Activated CD8-positive, alpha-beta T cell treated with anti-CD3 and anti-CD28 coated beads, Interleukin-2, amount 10 ng/mL, durations not matched to agents 7 days and 5 days (primary cell): ENCODE measurements at regions of chr1 and their contacts with region 1.

Region 1: GRCh38 chr1:32773018-32773763 is 44.0 kb downstream of the YARS1 start:
- DNase-seq: peak; percentile 80
- ATAC-seq: peak; percentile 80
- H3K4me3 Mint-ChIP-seq: no peak overlapping the region
- H3K27ac Mint-ChIP-seq: no peak overlapping the region
- H3K4me1 Mint-ChIP-seq: peaks cover 21% of the 10 kb centered on the region
- H3K27me3 Mint-ChIP-seq: no peaks in the 10 kb centered on the region

Region 2: GRCh38 chr1:32521165-32521564 is 252.0 kb before region 1 on chr1:
- CTCF ChIA-PET with region 1: interaction called, 19 read pairs
- POLR2A ChIA-PET with region 1: no interaction called
- DNase-seq: no peak
- ATAC-seq: no peak
- H3K4me3 Mint-ChIP-seq: peak overlapping the region; percentile 72
- H3K27ac Mint-ChIP-seq: no peak overlapping the region
- H3K4me1 Mint-ChIP-seq: peaks cover 3% of the 10 kb centered on the region
- H3K27me3 Mint-ChIP-seq: peaks cover 5% of the 10 kb centered on the region

Region 3: GRCh38 chr1:32702599-32703478 is 70.4 kb before region 1 on chr1 and contains the start of gene SYNC:
- CTCF ChIA-PET with region 1: interaction called, 12 read pairs
- POLR2A ChIA-PET with region 1: no interaction called
- DNase-seq: peak; percentile 33
- ATAC-seq: peak; percentile 76
- H3K4me3 Mint-ChIP-seq: no peak within 1 kb of the TSS
- H3K27ac Mint-ChIP-seq: no peak within 1 kb of the TSS
- H3K4me1 Mint-ChIP-seq: peaks cover 8% of the 10 kb centered on the region
- H3K27me3 Mint-ChIP-seq: peaks cover 37% of the 10 kb centered on the region
- total RNA-seq, gene SYNC: not detected

Region 4: GRCh38 chr1:32761253-32761880 is 11.8 kb before region 1 on chr1:
- CTCF ChIA-PET with region 1: interaction called, 30 read pairs
- POLR2A ChIA-PET with region 1: interaction called, 3 read pairs
- DNase-seq: no peak
- ATAC-seq: no peak
- H3K4me3 Mint-ChIP-seq: no peak overlapping the region
- H3K27ac Mint-ChIP-seq: no peak overlapping the region
- H3K4me1 Mint-ChIP-seq: peaks cover 13% of the 10 kb centered on the region
- H3K27me3 Mint-ChIP-seq: peaks cover 4% of the 10 kb centered on the region

Region 5: DNA sequence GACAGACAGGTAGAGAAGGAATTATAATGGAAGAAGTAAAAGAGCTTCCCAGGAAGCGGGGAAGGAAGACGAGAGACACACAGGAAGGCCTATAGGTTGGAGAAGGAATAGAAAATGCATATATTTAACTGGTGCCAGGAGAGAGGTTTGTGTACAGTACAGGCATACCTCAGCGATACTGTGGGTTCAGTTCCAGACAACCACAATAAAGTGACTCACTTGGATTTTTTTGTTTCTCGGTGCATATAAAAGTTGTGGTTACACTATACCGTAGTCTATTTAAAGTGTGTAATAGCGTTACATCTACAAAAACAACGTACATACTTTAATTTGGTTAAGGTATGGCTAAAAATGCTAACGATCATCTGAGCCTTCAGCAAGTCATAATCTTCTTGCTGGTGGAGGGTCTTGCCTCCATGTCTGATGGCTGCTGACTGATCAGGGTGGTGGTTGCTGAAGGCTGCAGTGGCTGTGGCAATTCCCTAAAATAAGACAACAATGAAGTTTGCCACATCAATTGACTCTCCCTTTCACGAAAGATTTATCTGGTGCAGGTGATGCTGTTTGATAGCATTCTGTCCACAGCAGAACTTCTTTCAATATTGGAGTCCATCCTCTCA is 28.0 kb after region 1 on chr1:
- CTCF ChIA-PET with region 1: interaction called, 14 read pairs
- POLR2A ChIA-PET with region 1: no interaction called
- DNase-seq: peak; percentile 48
- ATAC-seq: peak; percentile 68
- H3K4me3 Mint-ChIP-seq: peak overlapping the region; percentile 4
- H3K27ac Mint-ChIP-seq: peak overlapping the region; percentile 48
- H3K4me1 Mint-ChIP-seq: peaks cover 55% of the 10 kb centered on the region
- H3K27me3 Mint-ChIP-seq: no peaks in the 10 kb centered on the region

Region 6: GRCh38 chr1:33036526-33037503 is 263.6 kb after region 1 on chr1 and contains the start of gene AK2:
- CTCF ChIA-PET with region 1: no interaction called
- POLR2A ChIA-PET with region 1: no interaction called
- DNase-seq: peak; percentile 95
- ATAC-seq: peak; percentile 100
- H3K4me3 Mint-ChIP-seq: peak within 1 kb of the TSS; percentile 91
- H3K27ac Mint-ChIP-seq: peak within 1 kb of the TSS; percentile 88
- H3K4me1 Mint-ChIP-seq: peaks cover 47% of the 10 kb centered on the region
- H3K27me3 Mint-ChIP-seq: no peaks in the 10 kb centered on the region
- total RNA-seq, gene AK2: 206 to 215 TPM